CD4-positive, alpha-beta T cell (primary cell): ENCODE measurements at regions of chr12 and their contacts with region 1.

Region 1: DNA sequence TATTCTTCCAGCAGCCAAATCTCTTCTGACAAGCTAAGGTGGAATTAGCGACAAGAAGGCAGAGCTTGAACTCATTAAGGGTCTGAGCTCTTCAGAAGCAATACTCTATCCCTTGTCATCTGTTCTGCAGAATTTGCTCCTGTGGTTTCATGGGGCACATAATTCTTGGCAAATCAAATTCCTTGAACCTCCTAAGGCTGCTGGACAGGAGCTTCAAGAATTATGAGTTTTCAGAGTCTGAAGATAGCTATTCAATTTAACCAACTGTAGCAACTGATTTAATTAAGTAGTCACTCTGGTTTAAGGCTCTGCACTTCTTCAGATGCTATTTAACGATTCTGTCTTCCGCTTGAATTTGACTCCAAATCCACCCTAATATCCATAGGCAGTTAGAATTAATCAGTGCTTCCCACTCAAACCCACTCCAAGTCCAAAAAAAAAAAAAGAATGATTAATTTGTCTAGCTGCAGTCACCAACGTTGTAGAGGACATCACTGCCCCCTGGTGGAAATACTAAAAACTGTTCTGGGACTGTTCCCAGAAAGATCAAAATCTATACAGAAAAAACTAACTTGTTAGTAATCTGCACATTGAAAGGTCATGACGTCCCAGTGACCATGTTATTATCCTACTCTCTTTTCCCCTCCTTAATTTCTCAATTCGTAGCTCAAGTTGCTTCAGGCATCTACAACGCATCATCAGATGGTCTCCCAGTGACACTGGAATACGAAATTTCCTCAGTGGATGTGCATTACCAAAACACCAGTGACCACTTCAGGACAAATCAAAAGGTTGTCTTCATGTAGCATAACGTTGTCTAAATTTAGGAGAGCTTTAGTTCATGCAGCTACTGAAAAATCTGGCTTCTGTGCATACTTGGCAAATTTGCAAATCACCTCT is 169.8 kb downstream of the KIF21A start:
- DNase-seq: peak in 4 of 14 experiments; percentile 16 to 47 (median 40)
- ATAC-seq: no peak
- H3K4me3 ChIP-seq: no peak overlapping the region
- H3K4me3 Mint-ChIP-seq: no peak overlapping the region
- H3K27ac ChIP-seq: no peak overlapping the region
- H3K27ac Mint-ChIP-seq: no peak overlapping the region
- H3K4me1 ChIP-seq: no peaks in the 10 kb centered on the region
- H3K4me1 Mint-ChIP-seq: no peaks in the 10 kb centered on the region
- H3K27me3 ChIP-seq: peaks cover 0 to 12% of the 10 kb centered on the region in 2 experiments
- H3K27me3 Mint-ChIP-seq: peaks cover 10% of the 10 kb centered on the region
- CTCF ChIP-seq: peak; percentile 76

Region 2: GRCh38 chr12:38332814-38333213 is 940.3 kb before region 1 on chr12:
- CTCF ChIA-PET with region 1: interaction called, 4 read pairs
- POLR2A ChIA-PET with region 1: no interaction called
- intact Hi-C with region 1: loop called in 1 of 2 experiments (anchors 5 kb)
- DNase-seq: no peak
- ATAC-seq: no peak
- H3K4me3 ChIP-seq: no peak overlapping the region
- H3K4me3 Mint-ChIP-seq: no peak overlapping the region
- H3K27ac ChIP-seq: no peak overlapping the region
- H3K27ac Mint-ChIP-seq: no peak overlapping the region
- H3K4me1 ChIP-seq: no peaks in the 10 kb centered on the region
- H3K4me1 Mint-ChIP-seq: peaks cover 5% of the 10 kb centered on the region
- H3K27me3 ChIP-seq: no peaks in the 10 kb centered on the region
- H3K27me3 Mint-ChIP-seq: no peaks in the 10 kb centered on the region
- CTCF ChIP-seq: no peak

Region 3: DNA sequence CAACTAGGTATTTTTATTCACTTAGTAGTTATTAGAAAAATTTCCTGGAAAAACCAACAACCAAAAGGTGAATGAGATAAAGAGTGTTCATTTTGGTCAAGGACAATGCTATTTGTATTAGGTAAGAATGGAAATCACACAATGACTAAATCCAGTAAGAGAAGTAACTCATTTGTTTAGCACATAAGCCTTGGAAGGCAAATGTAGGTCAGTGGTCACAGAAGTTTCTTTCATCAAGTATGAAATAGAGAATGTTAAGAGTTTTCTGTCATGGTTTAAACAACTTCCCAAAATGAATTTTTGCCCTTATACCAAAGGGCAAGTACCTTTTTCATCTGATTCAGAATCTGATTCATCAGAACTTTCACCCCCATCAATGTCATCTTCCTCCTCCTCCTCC is 68.1 kb after region 1 on chr12:
- CTCF ChIA-PET with region 1: no interaction called
- POLR2A ChIA-PET with region 1: no interaction called
- intact Hi-C with region 1: no loop called
- DNase-seq: no peak
- ATAC-seq: no peak
- H3K4me3 ChIP-seq: no peak overlapping the region
- H3K4me3 Mint-ChIP-seq: no peak overlapping the region
- H3K27ac ChIP-seq: no peak overlapping the region
- H3K27ac Mint-ChIP-seq: no peak overlapping the region
- H3K4me1 ChIP-seq: no peaks in the 10 kb centered on the region
- H3K4me1 Mint-ChIP-seq: no peaks in the 10 kb centered on the region
- H3K27me3 ChIP-seq: no peaks in the 10 kb centered on the region
- H3K27me3 Mint-ChIP-seq: no peaks in the 10 kb centered on the region
- CTCF ChIP-seq: no peak